Heart left ventricle (tissue), 16 donors: ENCODE measurements at regions of chr9 and their contacts with region 1.

Region 1: DNA sequence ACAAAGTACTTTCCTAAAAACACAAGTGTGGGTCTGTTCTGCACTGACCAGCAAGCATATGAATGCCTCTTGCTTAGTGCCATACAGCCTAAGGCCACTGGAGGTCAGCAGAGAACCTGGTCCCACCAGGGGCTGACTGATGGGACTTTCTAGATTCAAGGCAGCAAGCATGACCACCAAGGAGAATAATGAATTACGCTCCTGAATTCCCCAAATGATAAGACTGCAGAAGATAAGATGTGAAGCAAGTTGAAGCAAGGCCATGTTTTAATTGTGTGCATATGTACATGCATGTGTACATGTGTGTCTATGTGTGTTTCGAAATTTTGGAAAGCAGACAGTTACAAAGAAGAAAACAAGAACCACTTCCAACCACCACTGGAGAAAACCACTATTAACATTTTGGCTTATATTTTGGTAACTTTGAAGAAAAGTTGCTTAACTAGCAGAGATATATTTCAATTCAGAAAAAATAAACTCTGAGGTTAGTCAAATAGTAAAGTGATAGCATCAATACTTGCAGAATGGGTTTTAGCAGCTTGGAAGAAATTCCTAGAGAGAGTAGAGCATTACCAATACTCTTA is 70.5 kb downstream of the ERP44 start:
- DNase-seq: peak; percentile 61 to 69 (median 65)
- ATAC-seq: peak; percentile 42 to 97 (median 94)
- H3K4me3 ChIP-seq: no peak overlapping the region
- H3K27ac ChIP-seq: no peak overlapping the region
- H3K4me1 ChIP-seq: peaks cover 0 to 11% (median 0%) of the 10 kb centered on the region in 12 donors
- H3K27me3 ChIP-seq: no peaks in the 10 kb centered on the region
- CTCF ChIP-seq: peak; percentile 89 to 96 (median 94)
- POLR2A ChIP-seq: no peak

Region 2: GRCh38 chr9:100098887-100099721 is 70.8 kb after region 1 on chr9 and contains the starts of genes ERP44 and INVS:
- intact Hi-C with region 1: loop called in 3 of 10 experiments (anchors 5 to 10 kb)
- DNase-seq: peak; percentile 99 to 100 (median 99)
- ATAC-seq: peak; percentile 99
- H3K4me3 ChIP-seq: peak within 1 kb of the TSS; percentile 57 to 98 (median 87)
- H3K27ac ChIP-seq: peak within 1 kb of the TSS; percentile 56 to 96 (median 90)
- H3K4me1 ChIP-seq: peaks cover 0 to 42% (median 24%) of the 10 kb centered on the region in 12 donors
- H3K27me3 ChIP-seq: no peaks in the 10 kb centered on the region
- CTCF ChIP-seq: no peak
- POLR2A ChIP-seq: peak in 1 of 2 donors; percentile 86
- total RNA-seq, gene ERP44: 7.9 to 20.5 (median 15.7) TPM
- total RNA-seq, gene INVS: 4.9 to 10.4 (median 7.5) TPM

Region 3: DNA sequence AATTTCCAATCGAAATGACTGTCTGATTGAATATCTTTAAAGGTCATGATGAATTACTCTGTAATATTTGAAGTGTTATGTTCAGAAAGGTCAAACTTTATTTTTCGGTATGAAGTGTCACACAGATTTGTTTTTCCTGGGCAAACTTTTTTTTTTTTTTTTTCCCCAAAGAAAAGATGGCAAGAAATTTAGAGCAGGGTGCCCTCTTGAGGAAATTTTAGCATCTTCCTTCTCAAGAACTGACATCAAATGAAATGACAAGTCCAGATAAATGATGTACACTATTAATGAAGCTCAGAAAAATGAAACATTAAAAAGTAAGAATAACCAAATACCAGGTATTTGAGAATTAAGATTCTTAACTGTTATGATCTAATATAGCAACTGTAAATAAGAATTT is 194.4 kb after region 1 on chr9:
- intact Hi-C with region 1: loop called in 9 of 10 experiments (anchors 1 to 5 kb)
- DNase-seq: no peak
- ATAC-seq: no peak
- H3K4me3 ChIP-seq: no peak overlapping the region
- H3K27ac ChIP-seq: no peak overlapping the region
- H3K4me1 ChIP-seq: peaks cover 0 to 17% (median 0%) of the 10 kb centered on the region in 12 donors
- H3K27me3 ChIP-seq: no peaks in the 10 kb centered on the region
- CTCF ChIP-seq: peak in 9 of 12 donors; percentile 9 to 59 (median 38)
- POLR2A ChIP-seq: no peak

Region 4: GRCh38 chr9:100322954-100323536 is 294.8 kb after region 1 on chr9:
- intact Hi-C with region 1: loop called in 9 of 10 experiments (anchors 2 to 10 kb)
- DNase-seq: no peak
- ATAC-seq: no peak
- H3K4me3 ChIP-seq: no peak overlapping the region
- H3K27ac ChIP-seq: no peak overlapping the region
- H3K4me1 ChIP-seq: peaks cover 0 to 6% (median 0%) of the 10 kb centered on the region in 12 donors
- H3K27me3 ChIP-seq: no peaks in the 10 kb centered on the region
- CTCF ChIP-seq: peak; percentile 46 to 75 (median 62)
- POLR2A ChIP-seq: no peak